A673 (cell line): ENCODE measurements at regions of chr1 and their contacts with region 1.

Region 1: DNA sequence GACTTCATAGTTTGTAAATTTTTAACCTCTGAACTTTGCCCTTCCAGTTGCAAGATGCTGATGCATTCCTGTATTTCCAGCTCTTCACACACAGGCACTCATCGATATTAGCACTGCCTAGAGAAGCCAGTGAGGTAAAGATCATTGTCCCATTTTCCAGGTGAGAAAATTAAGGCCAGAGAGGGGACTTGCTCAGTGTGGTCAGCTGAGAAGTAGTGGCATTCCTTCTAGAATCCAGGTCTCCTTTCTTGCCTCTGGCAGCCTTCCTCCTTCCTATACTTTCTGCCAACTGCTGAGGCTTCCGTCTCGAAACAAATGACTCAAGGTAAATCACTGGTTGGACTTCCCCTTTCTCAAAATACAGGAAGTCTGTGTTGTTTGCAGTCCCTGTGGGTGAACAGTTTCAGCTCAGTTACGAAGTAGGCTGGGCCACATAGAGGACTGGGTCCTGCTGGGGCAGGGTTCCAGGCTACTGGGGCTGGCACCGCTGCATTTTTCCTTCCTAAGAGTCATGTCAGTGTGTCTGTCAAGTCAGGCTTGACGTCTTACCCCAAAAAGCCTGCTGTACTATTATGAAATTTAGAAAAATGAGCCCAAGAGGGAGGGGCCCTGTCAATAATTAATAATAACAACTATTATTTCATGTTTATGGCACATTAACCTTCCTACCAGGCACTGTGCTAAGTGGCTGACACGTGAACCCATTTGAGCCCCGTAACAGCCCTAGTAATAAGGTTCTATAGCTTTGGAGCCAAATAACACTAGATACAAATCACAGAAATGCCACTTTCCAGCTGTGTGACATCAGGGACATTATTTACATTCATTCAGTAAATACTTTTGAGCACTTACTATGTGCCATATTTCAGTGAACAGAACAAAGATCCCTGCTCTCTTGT is 16.6 kb upstream of the RNF19B start:
- DNase-seq: peak; percentile 51
- H3K4me3 ChIP-seq: no peak overlapping the region
- H3K27ac ChIP-seq: peak overlapping the region; percentile 0
- H3K4me1 ChIP-seq: peaks cover 10% of the 10 kb centered on the region
- H3K27me3 ChIP-seq: no peaks in the 10 kb centered on the region
- CTCF ChIP-seq: no peak

Region 2: DNA sequence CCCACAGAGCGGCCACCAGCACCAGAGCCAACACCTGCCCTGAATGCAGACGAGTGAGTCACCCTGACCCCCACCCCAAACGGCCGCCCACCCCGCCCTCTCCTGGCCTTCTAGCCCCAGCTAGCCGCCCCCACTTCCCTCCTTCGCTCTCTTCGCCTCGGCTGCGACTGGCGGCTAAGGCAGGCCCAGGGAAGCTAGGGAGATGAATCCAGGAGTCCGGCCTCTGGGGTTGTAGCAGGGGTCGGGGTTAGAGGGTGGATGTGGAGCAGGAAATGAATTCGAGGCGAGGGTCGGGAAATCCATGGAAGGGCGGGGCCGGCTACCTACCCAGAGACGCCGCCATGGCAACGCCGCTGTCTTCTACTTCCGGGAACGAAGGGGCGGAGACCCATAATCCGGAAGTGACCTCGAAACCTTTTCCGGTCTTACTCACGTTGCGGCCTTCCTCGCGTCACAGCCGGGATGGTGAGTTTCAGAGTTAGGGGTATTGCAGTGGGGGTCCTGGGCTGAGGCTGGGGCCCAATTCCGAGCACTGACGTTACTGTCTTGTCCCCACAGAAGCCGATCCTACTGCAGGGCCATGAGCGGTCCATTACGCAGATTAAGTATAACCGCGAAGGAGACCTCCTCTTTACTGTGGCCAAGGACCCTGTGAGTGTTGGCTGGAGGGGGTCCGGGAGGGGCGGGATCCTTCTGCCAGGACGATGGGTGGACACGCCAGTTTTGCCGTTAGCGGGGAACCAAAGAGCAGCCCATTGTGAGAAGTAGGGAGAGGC is 759.1 kb before region 1 on chr1 and contains the starts of genes EIF3I and TMEM234:
- CTCF ChIA-PET with region 1: no interaction called
- POLR2A ChIA-PET with region 1: interaction called, 12 read pairs
- intact Hi-C with region 1: no loop called
- DNase-seq: peak; percentile 95
- H3K4me3 ChIP-seq: peak within 1 kb of the TSS; percentile 85
- H3K27ac ChIP-seq: peak within 1 kb of the TSS; percentile 89
- H3K4me1 ChIP-seq: peaks cover 17% of the 10 kb centered on the region
- H3K27me3 ChIP-seq: no peaks in the 10 kb centered on the region
- CTCF ChIP-seq: no peak
- total RNA-seq, gene EIF3I: 298 and 303 TPM in 2 replicates
- total RNA-seq, gene TMEM234: 15.4 TPM in 2 replicates

Region 3: DNA sequence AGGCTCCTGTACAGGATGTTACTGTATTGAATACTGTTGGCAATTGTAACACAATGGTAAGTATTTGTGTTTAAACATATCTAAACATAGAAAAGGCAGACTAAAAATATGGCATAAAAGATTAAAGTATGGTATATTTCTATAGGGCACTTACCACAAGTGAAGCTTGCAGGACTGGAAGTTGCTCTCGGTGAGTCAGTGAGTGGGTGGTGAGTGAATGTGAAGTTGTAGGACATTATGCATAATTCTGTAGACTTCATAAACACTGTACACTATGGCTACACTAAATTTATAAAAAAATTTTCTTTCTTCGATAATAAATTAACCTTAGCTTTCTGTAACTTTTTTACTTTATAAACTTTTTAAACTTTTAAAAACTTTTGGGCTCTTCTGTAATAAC is 214.3 kb after region 1 on chr1:
- CTCF ChIA-PET with region 1: no interaction called
- POLR2A ChIA-PET with region 1: no interaction called
- intact Hi-C with region 1: no loop called
- DNase-seq: no peak
- H3K4me3 ChIP-seq: no peak overlapping the region
- H3K27ac ChIP-seq: no peak overlapping the region
- H3K4me1 ChIP-seq: no peaks in the 10 kb centered on the region
- H3K27me3 ChIP-seq: peaks cover 11% of the 10 kb centered on the region
- CTCF ChIP-seq: no peak